ENCODE measurements at regions of chr17 and their contacts with region 1.

Region 1: GRCh38 chr17:72474719-72475477 is 354.1 kb downstream of the SOX9 start:
- DNase-seq: no peak
- H3K4me3 ChIP-seq: no peak overlapping the region
- H3K27ac ChIP-seq: peak overlapping the region in 19 of 59 donors; percentile 3 to 83 (median 54)
- H3K27me3 ChIP-seq: peaks cover 0 to 14% (median 0%) of the 10 kb centered on the region in 45 donors
- CTCF ChIP-seq: no peak

Region 2: DNA sequence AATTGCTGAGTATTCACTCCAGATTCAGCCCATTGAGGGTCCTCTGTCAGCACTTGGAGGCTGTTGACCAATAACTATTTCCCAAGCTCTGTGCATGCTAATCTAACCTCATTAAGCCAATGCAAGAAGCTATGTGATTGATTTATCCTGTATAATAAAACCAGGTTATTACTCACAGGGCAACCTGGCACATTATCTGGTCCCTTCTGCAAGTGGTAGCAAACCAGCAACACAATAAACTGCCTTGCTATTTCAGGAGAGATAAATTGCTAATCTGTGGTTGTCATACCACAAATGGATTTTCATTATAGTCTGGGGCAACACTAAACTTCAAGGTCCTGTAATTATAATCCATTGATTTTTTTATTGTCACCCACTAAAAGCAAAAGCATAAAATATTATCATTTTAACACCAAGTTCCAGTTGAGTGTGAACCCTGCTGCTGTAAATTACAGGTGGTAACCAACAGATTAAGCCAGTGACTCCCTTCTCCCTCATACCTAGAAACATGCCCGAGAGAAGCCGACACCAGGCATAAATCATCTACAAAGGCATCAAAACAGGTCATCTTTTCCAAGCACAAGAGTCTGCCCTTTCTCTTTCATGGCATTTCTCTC is 405.2 kb before region 1 on chr17:
- intact Hi-C with region 1: loop called in 1 of 2 experiments (anchors 5 kb)
- DNase-seq: no peak
- H3K4me3 ChIP-seq: no peak overlapping the region
- H3K27ac ChIP-seq: no peak overlapping the region
- H3K27me3 ChIP-seq: no peaks in the 10 kb centered on the region
- CTCF ChIP-seq: no peak

Region 3: DNA sequence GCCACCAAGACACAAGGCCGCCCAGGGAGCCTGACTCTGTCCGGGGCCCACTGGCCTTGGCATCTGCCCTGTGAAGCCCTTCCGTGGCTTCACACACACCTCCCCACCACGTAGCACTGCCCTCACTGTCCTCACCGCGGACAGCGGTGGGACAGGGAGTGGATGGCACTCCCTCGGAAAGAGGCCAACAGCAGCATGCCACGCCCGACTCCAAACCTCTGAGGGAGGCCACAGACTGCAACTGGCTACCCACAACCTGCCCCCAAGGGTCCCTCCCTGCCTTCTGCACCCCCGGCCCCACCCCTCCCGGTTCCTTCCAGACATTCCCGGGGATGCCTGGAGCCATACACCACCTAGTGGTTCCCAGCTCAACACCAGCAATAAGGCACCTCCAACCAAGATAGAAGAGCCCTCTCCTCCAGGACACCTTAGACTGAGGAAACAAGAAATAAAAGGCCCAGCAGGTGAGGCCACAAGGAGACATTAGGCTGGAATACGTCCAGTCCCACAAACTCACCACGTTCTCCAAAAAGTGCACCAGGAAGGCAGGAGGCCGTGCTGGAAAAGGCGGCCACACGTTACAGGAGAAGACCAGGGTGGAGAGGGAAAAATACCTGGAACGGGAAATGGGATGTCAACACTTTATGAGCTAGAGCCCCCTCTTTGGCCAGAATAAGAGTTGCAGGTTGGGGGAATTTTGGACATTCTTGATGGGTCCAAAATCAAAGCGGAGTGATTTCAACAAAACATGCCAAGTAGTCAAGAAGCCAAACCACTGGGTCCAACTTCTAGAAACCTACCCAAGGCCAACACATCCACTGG is 44.1 kb before region 1 on chr17:
- intact Hi-C with region 1: no loop called
- DNase-seq: no peak
- H3K4me3 ChIP-seq: no peak overlapping the region
- H3K27ac ChIP-seq: no peak overlapping the region
- H3K27me3 ChIP-seq: no peaks in the 10 kb centered on the region
- CTCF ChIP-seq: peak in 4 of 56 donors; percentile 9 to 16 (median 10)

Region 4: DNA sequence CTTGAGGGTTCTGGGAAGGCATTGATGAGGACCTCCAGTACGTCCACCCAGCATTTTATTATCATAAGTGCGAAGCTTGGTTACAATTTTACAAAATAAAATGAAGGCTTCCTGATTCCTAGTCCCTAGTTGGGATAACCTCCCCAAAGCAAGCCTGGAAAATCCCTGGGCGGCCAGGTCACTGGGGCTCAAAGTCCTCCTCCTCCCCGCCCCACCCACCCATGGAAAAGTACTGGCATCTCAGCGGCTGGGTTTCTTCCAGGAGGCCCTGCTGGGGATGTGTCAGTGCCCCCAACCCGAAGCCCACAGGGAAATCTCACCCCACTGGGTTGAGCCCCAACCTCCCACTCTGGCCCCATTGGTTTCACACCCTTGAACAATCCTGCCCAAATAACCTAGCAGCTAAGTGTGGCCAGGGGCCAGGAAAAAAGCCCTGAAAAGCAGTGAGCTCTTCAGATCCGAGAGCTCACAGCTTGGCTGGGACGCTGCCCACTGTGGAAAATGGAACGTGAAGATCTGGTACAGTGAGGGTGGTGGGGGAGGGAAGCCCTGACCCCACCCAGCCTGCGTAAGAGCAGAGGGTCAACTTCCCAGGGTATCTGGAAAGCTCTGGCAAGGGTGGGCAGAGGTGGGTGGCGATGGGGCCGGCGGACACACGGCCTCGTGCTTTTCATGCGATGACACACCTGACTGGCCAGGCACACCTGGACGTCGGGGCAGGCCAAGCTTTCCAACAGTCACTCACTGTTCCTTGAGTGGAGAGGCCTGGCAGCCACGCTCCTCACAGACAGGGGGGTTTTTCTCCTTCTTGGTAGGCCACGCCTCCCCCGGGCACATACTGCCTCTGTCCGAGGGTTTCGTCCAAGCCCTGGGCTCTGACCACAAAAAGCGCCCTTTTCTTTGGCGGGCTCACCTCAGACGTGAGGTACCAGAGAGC is 29.6 kb before region 1 on chr17:
- intact Hi-C with region 1: no loop called
- DNase-seq: peak in 4 of 10 donors; percentile 32 to 50 (median 42)
- H3K4me3 ChIP-seq: no peak overlapping the region
- H3K27ac ChIP-seq: peak overlapping the region in 29 of 59 donors; percentile 9 to 69 (median 35)
- H3K27me3 ChIP-seq: peaks cover 0 to 23% (median 0%) of the 10 kb centered on the region in 45 donors
- CTCF ChIP-seq: no peak

Measured in dorsolateral prefrontal cortex (tissue), 120 donors.